T-cell (primary cell): ENCODE measurements at regions of chr22 and their contacts with region 1.

Region 1: DNA sequence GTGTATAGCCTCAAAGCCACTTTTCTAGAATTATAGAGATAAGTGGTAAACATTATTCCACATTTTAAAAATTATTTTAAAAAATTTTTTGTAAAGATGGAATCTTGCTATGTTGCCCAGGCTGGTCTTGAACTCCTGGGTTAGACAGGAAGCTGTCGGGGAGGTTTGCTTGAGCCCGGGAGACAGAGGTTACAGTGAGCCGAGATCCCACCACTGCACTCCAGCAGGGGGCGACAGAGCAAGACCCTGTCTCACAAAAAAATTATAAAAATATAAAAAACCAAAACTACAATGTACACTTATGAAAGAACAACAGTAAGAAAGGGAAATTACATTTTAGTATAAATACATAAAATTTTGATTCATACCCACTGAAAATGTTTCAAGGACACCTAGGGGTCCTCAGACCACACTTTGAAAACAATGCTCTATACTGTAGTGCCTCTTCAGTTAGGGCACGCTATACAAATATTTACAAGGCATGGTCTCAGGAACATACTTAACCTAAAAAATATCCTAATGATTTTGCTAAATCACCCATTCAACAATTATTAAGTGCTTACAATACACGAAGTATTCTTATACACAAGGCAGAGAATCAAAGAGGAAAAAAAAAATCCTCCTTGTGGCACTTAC is 111.2 kb downstream of the MRTFA start:
- DNase-seq: peak; percentile 53 to 82 (median 74)
- ATAC-seq: peak; percentile 77 to 85 (median 80)
- H3K4me3 ChIP-seq: no peak overlapping the region
- H3K4me3 Mint-ChIP-seq: no peak overlapping the region
- H3K27ac ChIP-seq: no peak overlapping the region
- H3K27ac Mint-ChIP-seq: peak overlapping the region; percentile 2 to 76
- H3K4me1 ChIP-seq: peaks cover 0 to 5% of the 10 kb centered on the region in 2 experiments
- H3K4me1 Mint-ChIP-seq: peaks cover 41 to 46% (median 42%) of the 10 kb centered on the region in 3 donors
- H3K27me3 ChIP-seq: no peaks in the 10 kb centered on the region
- H3K27me3 Mint-ChIP-seq: no peaks in the 10 kb centered on the region

Region 2: DNA sequence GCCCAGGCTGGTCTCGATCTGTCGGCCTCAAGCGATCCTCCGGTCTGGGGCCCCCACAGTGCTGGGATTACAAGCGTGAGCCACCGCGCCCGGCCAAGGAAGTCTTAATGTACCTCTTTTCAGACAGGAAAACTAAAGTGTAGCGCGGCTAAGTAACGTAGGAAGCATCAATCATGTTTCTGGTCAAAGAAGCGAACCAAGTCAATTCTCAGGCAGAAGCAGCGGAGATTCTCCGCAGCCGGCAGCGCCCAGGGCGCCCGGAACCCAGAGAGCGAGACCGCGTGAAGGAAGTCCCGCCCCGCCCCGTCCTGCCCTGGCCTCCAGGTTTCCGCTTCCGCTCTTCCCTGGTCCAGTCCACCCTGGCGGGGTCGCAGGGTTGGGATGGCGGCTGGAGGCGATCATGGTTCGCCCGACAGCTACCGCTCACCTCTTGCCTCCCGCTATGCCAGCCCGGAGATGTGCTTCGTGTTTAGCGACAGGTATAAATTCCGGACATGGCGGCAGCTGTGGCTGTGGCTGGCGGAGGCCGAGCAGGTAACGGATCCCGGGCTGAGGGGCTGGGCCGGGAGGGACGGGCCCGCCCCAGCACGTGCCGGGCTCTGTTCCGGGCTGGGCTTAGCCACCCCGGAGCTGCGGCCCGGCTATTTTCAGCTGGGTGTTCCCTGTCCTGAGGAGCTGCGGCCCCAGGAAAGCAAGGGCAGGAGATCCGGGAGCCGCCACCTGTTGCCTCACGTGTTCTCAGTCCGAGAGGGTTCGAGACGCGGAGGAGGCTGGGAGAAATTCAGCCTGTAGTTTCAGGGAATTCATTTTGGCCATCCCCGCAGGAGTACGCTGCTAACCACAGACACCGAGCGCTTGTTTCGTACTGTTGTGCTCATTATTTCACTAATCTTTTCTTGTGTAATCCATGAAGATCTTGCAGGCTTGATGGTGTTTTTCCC is 178.9 kb before region 1 on chr22 and contains the start of gene ADSL:
- CTCF ChIA-PET with region 1: no interaction called
- POLR2A ChIA-PET with region 1: no interaction called
- DNase-seq: peak; percentile 61 to 88 (median 76)
- ATAC-seq: peak; percentile 85 to 89 (median 87)
- H3K4me3 ChIP-seq: peak within 1 kb of the TSS; percentile 81 to 96
- H3K4me3 Mint-ChIP-seq: peak within 1 kb of the TSS; percentile 92 to 98 (median 97)
- H3K27ac ChIP-seq: peak within 1 kb of the TSS; percentile 85
- H3K27ac Mint-ChIP-seq: peak within 1 kb of the TSS; percentile 98 to 99
- H3K4me1 ChIP-seq: peaks cover 32 to 60% of the 10 kb centered on the region in 2 experiments
- H3K4me1 Mint-ChIP-seq: peaks cover 53 to 63% (median 58%) of the 10 kb centered on the region in 3 donors
- H3K27me3 ChIP-seq: no peaks in the 10 kb centered on the region
- H3K27me3 Mint-ChIP-seq: no peaks in the 10 kb centered on the region
- total RNA-seq, gene ADSL: 64.0 to 84.3 (median 75.1) TPM

Region 3: DNA sequence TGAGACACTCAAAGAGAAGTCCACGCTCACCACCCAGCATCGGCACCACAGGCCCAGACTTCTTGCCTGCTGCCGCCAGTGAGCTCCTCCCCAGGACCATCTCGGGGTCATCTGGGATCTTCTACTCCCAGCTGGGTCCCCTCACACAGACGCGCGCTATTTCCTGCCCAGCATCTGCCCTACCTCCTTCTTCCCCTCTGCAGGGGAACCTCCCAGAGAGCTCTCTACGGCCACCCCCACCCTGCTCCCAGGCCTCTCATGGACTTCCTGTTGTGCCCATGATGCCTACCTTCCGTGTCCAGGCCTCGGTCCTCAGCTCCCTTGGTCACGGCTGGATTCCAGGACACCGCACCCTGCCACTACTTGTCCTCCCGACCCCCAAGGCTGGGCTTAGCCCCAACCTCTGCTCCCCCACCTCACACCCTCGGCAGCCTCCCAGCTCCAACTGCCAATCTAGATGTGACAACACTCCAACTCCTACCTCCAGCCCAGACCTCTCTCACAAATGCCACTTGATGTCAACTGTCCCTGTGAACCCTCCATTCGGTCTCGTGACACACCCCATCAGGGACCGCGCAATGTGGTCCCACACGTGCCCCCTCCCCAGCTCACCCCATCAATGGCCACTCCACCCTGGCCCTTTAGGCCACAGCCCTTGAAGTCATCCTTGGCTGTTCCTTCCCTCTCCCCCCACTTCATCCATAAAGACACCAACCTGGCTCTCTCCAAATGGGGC is 109.7 kb before region 1 on chr22:
- CTCF ChIA-PET with region 1: no interaction called
- POLR2A ChIA-PET with region 1: no interaction called
- DNase-seq: peak in 2 of 35 experiments; percentile 20 to 36
- ATAC-seq: peak; percentile 36 to 66 (median 54)
- H3K4me3 ChIP-seq: no peak overlapping the region
- H3K4me3 Mint-ChIP-seq: peak overlapping the region in 1 of 3 donors; percentile 16
- H3K27ac ChIP-seq: peak overlapping the region; percentile 55
- H3K27ac Mint-ChIP-seq: peak overlapping the region; percentile 89 to 96
- H3K4me1 ChIP-seq: peaks cover 2 to 53% of the 10 kb centered on the region in 2 experiments
- H3K4me1 Mint-ChIP-seq: peaks cover 24 to 40% (median 36%) of the 10 kb centered on the region in 3 donors
- H3K27me3 ChIP-seq: no peaks in the 10 kb centered on the region
- H3K27me3 Mint-ChIP-seq: no peaks in the 10 kb centered on the region

Region 4: DNA sequence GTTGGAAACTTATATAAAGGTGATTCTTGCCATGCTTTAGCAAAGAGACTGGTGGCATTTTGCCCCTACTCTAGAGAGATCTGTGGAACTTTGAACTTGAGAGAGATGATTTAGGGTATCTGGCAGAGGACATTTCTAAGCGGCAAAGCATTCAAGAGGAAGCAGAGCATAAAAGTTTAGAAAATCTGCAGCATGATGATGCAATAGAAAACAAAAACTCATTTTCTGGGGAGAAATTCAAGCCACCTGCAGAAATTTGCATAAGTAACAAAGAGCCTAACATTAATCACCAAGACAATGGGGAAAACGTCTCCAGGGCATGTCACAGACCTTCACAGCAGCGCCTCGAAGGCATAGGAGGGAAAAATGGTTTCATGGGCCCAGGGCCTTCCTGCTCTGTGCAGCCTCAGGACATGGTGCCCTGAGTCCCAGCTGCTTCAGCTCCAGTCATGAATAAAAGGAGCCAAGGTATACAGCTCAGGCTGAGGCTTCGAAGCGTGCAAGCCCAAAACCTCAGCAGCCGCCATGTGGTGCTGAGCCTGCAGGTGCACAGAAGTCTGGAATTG is 27.7 kb after region 1 on chr22:
- CTCF ChIA-PET with region 1: no interaction called
- POLR2A ChIA-PET with region 1: no interaction called
- DNase-seq: no peak
- ATAC-seq: no peak
- H3K4me3 ChIP-seq: no peak overlapping the region
- H3K4me3 Mint-ChIP-seq: no peak overlapping the region
- H3K27ac ChIP-seq: no peak overlapping the region
- H3K27ac Mint-ChIP-seq: peak overlapping the region in 1 of 2 donors; percentile 36
- H3K4me1 ChIP-seq: peaks cover 0 to 5% of the 10 kb centered on the region in 2 experiments
- H3K4me1 Mint-ChIP-seq: peaks cover 19 to 32% (median 27%) of the 10 kb centered on the region in 3 donors
- H3K27me3 ChIP-seq: no peaks in the 10 kb centered on the region
- H3K27me3 Mint-ChIP-seq: no peaks in the 10 kb centered on the region

Region 5: DNA sequence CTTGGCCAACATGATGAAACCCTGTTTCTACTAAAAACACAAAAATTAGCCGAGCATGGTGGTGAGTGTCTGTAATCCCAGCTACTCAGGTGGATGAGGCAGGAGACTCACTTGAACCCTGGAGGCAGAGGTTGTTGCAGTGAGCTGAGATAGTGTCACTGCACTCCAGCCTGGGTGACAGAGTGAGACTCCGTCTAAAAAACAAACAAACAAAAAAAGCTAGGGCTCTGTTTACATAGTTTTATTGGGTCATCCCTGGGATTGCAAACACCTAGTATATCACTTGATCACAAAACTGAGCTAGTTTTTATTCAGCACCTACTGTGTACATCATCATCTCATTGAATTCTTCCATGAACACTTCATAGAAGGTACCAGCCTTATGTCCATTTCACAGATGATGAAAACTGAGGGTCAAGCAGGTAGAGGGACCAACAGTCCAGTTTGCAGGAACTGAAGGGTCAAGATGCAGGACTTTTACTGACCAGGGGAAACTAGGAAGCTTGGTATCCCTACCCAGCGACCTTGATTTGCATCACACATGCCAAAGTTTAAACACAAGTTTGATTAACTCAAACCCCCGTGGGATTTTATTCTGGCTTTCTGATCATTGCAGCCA is 120.3 kb after region 1 on chr22:
- CTCF ChIA-PET with region 1: interaction called, 12 to 41 read pairs
- POLR2A ChIA-PET with region 1: no interaction called
- DNase-seq: no peak
- ATAC-seq: peak in 2 of 4 experiments; percentile 13 to 31
- H3K4me3 ChIP-seq: no peak overlapping the region
- H3K4me3 Mint-ChIP-seq: no peak overlapping the region
- H3K27ac ChIP-seq: no peak overlapping the region
- H3K27ac Mint-ChIP-seq: no peak overlapping the region
- H3K4me1 ChIP-seq: peaks cover 3 to 7% of the 10 kb centered on the region in 2 experiments
- H3K4me1 Mint-ChIP-seq: peaks cover 4 to 14% (median 6%) of the 10 kb centered on the region in 3 donors
- H3K27me3 ChIP-seq: no peaks in the 10 kb centered on the region
- H3K27me3 Mint-ChIP-seq: no peaks in the 10 kb centered on the region